Gastrocnemius medialis (tissue), 4 donors: ENCODE measurements at regions of chr13 and their contacts with region 1.

Region 1: GRCh38 chr13:52450012-52450792 is at the start of gene VPS36:
- DNase-seq: peak; percentile 87 to 93
- ATAC-seq: peak; percentile 82 to 86
- H3K4me3 ChIP-seq: peak within 1 kb of the TSS; percentile 69 to 88 (median 77)
- H3K27ac ChIP-seq: peak within 1 kb of the TSS; percentile 85 to 97 (median 91)
- H3K4me1 ChIP-seq: peaks cover 25 to 28% of the 10 kb centered on the region in 2 donors
- H3K27me3 ChIP-seq: no peaks in the 10 kb centered on the region
- CTCF ChIP-seq: peak; percentile 97 to 100 (median 100)
- POLR2A ChIP-seq: peak; percentile 89 to 91
- total RNA-seq, gene VPS36: 27.1 to 55.7 (median 45.2) TPM

Region 2: DNA sequence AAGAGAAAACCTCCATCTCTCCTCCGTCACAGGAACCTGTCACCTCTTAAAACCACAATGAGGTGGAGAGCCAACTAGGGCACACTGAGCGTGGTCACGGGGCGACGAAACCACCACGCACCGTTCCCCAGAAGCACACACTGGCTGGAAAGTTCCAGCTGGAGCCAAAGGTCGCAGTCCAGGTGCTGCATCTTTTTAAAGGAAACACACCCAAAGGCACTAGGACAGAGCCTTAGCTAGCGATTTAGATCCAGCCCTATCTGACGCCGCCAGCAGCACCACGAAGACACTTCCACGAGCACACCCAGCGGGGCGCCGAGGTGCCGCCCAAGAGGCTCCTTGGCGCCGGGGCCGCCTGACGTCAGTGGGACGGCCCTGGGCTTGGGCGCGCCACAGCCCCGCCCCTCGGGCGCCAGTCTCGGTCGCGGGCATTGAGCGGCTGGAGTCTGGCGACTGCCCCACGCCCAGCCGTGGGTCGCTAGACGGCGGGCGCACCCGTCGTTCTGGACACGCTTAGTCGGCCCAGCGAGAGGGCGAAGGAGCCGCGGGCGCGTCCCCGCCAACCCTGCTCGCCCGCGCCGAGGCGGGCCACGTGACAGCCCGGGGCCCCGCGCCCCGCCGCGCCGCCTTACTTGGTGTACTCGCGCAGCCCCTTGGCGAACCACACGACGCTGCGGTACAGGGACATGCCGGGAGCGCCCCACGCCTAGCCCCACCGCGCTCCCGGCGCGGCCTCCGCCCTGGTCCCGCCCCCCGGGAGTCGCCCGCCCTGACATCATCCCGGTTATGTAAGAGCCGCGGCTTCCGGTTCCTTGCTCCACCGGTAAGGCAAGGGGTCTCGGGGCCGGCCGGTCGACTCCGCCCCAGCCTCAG is 646.5 kb before region 1 on chr13 and contains the start of gene DHRS12:
- in situ Hi-C with region 1: loop called in 1 of 4 experiments (anchors 25 kb)
- intact Hi-C with region 1: loop called (anchors 10 kb)
- DNase-seq: peak; percentile 68 to 85
- ATAC-seq: peak; percentile 81 to 87
- H3K4me3 ChIP-seq: peak within 1 kb of the TSS; percentile 74 to 99 (median 86)
- H3K27ac ChIP-seq: peak within 1 kb of the TSS; percentile 89 to 100 (median 96)
- H3K4me1 ChIP-seq: peaks cover 37 to 46% of the 10 kb centered on the region in 2 donors
- H3K27me3 ChIP-seq: no peaks in the 10 kb centered on the region
- CTCF ChIP-seq: peak in 1 of 5 experiments; percentile 4
- POLR2A ChIP-seq: peak; percentile 90 to 93
- total RNA-seq, gene DHRS12: 1.8 to 6.0 (median 4.7) TPM

Region 3: GRCh38 chr13:52011632-52012511 is 438.3 kb before region 1 on chr13 and contains the start of gene ALG11:
- in situ Hi-C with region 1: loop called in 3 of 4 experiments (anchors 25 kb)
- intact Hi-C with region 1: loop called (anchors 5 kb)
- DNase-seq: peak; percentile 99
- ATAC-seq: peak; percentile 98
- H3K4me3 ChIP-seq: peak within 1 kb of the TSS; percentile 84 to 92 (median 88)
- H3K27ac ChIP-seq: peak within 1 kb of the TSS; percentile 83 to 90 (median 86)
- H3K4me1 ChIP-seq: peaks cover 24 to 25% of the 10 kb centered on the region in 2 donors
- H3K27me3 ChIP-seq: no peaks in the 10 kb centered on the region
- CTCF ChIP-seq: peak in 1 of 5 experiments; percentile 23
- POLR2A ChIP-seq: peak; percentile 44 to 64
- total RNA-seq, gene ALG11: 8.9 to 14.2 (median 10.1) TPM

Region 4: DNA sequence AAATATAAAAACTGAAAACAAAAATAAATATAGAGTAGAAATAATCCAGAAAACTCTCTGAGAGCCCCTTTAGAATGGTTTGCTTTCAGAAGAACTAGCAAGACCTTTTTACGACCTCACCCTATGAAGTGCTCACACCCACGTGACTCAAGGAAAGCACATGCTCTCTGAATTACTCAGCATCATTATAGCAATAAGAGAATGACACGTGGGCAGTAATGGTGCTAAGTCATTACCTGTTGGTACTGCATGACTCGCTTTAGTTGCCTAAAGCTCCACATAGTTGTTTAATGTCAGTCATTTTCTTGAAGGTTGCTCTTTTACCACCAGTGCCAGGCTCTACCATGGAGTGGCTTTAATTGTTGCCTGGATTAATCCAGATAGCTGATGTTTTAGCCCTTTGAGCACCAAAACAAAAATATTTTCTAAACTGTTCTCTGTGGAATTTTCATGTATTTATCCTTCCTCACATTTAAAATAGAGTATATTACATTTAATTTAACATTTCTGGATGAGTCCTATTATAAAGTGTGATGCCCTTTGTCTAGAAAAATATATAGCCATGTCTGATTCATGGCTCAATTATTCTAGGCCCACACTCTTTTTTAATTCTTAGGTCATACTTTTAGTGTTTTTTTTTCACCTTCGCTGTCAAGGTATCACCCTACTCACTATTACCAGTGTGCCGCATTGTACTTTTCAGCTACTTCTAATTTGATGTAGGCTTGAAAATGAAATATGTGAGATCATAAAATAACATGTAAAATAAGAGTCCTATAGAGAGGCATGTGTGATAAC is 101.0 kb before region 1 on chr13:
- in situ Hi-C with region 1: loop called in 1 of 4 experiments (anchors 10 kb)
- intact Hi-C with region 1: no loop called
- DNase-seq: no peak
- ATAC-seq: no peak
- H3K4me3 ChIP-seq: no peak overlapping the region
- H3K27ac ChIP-seq: no peak overlapping the region
- H3K4me1 ChIP-seq: no peaks in the 10 kb centered on the region
- H3K27me3 ChIP-seq: no peaks in the 10 kb centered on the region
- CTCF ChIP-seq: no peak
- POLR2A ChIP-seq: no peak

Region 5: GRCh38 chr13:52393572-52394357 is 56.4 kb before region 1 on chr13:
- in situ Hi-C with region 1: no loop called
- intact Hi-C with region 1: no loop called
- DNase-seq: no peak
- ATAC-seq: no peak
- H3K4me3 ChIP-seq: no peak overlapping the region
- H3K27ac ChIP-seq: peak overlapping the region in 1 of 4 donors; percentile 9
- H3K4me1 ChIP-seq: peaks cover 0 to 6% of the 10 kb centered on the region in 2 donors
- H3K27me3 ChIP-seq: no peaks in the 10 kb centered on the region
- CTCF ChIP-seq: no peak
- POLR2A ChIP-seq: no peak

Region 6: DNA sequence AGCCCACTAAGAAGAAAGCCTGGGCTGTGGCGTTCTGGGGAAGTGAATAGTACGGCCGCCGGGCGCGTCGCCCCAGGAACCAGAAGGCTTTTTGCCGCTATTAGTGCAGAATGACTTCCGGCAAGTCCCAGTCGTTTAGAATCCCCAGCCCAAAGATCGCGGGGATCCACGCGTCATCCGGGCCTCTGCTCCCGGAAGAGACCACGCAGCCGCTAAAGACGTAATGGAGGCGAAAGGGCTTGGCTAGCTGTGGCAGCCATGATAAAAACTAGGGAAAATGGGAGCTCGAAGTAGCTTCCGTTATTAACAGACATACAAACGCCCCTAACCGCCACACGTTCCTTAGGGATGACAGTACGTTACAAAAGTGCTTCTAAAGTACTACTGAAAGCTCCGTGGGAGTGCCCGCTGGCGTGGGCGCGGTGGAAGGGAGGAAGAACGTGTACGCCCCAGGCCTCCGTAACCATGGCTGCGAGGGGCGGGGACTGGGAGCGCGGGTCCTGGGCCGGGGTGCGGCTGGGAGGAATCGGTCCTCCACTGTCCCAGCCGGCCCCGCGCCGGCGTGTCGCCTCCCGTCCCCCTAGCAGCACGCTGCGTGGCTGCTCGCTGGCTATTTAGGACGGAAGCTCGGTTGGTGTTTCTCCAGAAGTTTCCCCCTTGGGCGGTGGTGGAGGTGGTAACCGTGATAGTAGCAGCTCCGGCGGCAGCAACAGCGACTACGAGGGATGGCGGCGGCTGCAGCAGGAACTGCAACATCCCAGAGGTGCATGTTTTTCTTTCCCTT is 202.2 kb after region 1 on chr13 and contains the start of gene SUGT1:
- in situ Hi-C with region 1: loop called in 3 of 4 experiments (anchors 10 to 25 kb)
- intact Hi-C with region 1: loop called (anchors 5 kb)
- DNase-seq: peak; percentile 95 to 97
- ATAC-seq: peak; percentile 96
- H3K4me3 ChIP-seq: peak within 1 kb of the TSS; percentile 69 to 97 (median 82)
- H3K27ac ChIP-seq: peak within 1 kb of the TSS; percentile 92 to 98 (median 98)
- H3K4me1 ChIP-seq: peaks cover 26 to 30% of the 10 kb centered on the region in 2 donors
- H3K27me3 ChIP-seq: no peaks in the 10 kb centered on the region
- CTCF ChIP-seq: peak; percentile 60 to 75 (median 68)
- POLR2A ChIP-seq: peak; percentile 64 to 77
- total RNA-seq, gene SUGT1: 37.5 to 48.5 (median 40.1) TPM

Region 7: GRCh38 chr13:53336441-53337160 is 886.4 kb after region 1 on chr13:
- in situ Hi-C with region 1: no loop called
- intact Hi-C with region 1: no loop called
- DNase-seq: no peak
- ATAC-seq: no peak
- H3K4me3 ChIP-seq: no peak overlapping the region
- H3K27ac ChIP-seq: no peak overlapping the region
- H3K4me1 ChIP-seq: no peaks in the 10 kb centered on the region
- H3K27me3 ChIP-seq: no peaks in the 10 kb centered on the region
- CTCF ChIP-seq: no peak
- POLR2A ChIP-seq: no peak